Heart right ventricle (tissue), 16 donors: ENCODE measurements at regions of chr4 and their contacts with region 1.

Region 1: DNA sequence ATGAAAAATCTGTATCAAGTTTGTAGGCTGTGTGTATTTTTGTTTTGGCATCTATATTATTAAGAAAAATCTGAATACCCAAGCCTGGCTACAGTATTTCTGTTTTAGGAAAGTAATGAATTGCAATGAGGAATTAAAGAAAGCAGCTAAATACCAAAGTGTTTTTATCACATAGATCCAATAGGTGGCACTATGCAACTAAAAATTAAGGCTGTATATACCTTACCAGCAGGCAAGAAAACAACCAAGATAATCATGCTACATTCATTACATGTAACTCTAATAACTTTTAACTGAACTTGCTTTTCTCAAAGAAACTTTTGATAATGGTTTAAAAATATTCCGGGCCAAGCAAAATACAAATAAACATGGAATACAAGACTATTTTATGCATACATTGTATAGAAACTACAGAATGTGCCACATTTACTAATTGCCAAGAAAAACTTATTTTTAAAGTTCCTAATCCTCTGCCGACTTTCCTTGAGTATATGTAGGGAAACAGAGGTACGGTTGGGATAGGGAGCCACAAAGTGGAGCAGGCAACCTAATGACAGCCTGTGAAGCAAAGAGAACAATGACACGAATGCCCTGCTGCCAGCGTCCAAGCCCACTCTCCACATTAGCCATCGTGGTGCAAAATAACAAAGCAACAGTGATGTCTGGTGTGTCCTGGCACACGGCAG is 63.7 kb downstream of the SEC24D start:
- DNase-seq: no peak
- ATAC-seq: peak; percentile 63 to 89 (median 80)
- H3K4me3 ChIP-seq: peak overlapping the region in 5 of 10 donors; percentile 13 to 25 (median 23)
- H3K27ac ChIP-seq: peak overlapping the region; percentile 6 to 81 (median 55)
- H3K4me1 ChIP-seq: peaks cover 5 to 85% (median 67%) of the 10 kb centered on the region in 9 donors
- H3K27me3 ChIP-seq: no peaks in the 10 kb centered on the region
- CTCF ChIP-seq: peak; percentile 28 to 78 (median 64)

Region 2: DNA sequence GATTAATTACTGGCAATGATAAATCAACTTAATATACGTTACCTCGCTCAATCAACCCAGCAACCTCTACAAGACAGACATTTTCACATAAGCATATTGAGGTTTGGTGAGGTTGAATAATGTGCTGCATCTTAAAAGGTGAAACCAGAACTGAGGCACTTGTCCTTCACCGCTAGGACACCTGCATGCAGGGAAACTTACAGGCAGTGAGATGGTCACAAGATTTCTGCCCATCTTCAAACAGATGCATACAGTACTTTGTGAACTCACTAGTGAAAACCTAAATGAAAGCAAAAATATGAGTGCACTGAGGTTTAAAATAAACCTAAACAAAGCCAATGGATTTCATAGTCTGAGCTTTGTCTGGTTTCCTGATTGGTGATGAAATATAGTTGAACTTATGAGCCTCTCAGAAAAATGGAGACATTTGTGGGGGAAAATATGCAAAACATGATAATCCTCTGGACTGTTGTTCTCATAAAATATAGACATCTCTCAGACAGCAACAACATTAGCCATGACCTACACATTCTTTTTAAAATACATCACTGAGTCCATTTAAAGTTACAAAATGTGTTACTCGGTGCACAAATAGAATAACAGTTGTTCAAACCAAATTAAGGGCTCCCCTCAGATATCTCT is 398.5 kb before region 1 on chr4:
- intact Hi-C with region 1: no loop called
- DNase-seq: no peak
- ATAC-seq: no peak
- H3K4me3 ChIP-seq: no peak overlapping the region
- H3K27ac ChIP-seq: no peak overlapping the region
- H3K4me1 ChIP-seq: no peaks in the 10 kb centered on the region
- H3K27me3 ChIP-seq: peaks cover 0 to 15% (median 0%) of the 10 kb centered on the region in 7 donors
- CTCF ChIP-seq: no peak

Region 3: GRCh38 chr4:118746292-118746919 is 25.8 kb before region 1 on chr4:
- intact Hi-C with region 1: loop called in 1 of 10 experiments (anchors 1 kb)
- DNase-seq: peak in 1 of 2 donors; percentile 68
- ATAC-seq: peak; percentile 76 to 96 (median 89)
- H3K4me3 ChIP-seq: no peak overlapping the region
- H3K27ac ChIP-seq: peak overlapping the region; percentile 28 to 87 (median 74)
- H3K4me1 ChIP-seq: peaks cover 10 to 70% (median 34%) of the 10 kb centered on the region in 9 donors
- H3K27me3 ChIP-seq: no peaks in the 10 kb centered on the region
- CTCF ChIP-seq: no peak

Region 4: DNA sequence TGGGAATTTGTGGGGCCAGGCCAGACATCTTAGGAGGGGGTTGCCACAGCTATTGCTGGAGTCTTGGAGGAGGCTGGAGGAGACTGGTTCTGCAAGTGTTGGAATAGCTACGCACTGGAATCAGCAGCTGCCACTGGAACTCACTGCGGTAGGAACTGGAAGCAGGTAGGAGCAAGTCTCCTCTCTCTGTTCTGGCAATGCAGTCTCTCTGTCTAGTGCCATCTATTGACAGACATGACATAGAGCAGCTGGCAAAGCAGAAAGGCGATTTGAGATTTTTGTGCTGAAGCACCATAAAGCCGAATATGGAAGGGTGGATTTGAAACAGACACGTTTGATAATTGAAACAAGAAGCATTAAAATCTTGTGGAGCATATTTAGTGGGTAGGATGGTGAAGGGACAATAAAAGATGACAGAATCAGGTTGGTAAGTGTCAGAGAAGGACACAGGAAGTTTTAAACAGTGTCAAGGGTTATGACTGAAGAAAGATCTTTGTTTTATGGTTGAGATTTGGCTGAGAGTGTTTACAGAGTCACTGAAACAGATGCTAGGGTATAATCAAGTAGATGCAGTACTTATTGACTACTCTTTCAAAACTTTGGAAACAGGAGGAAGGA is 93.0 kb after region 1 on chr4:
- intact Hi-C with region 1: loop called in 1 of 10 experiments (anchors 5 kb)
- DNase-seq: peak in 1 of 2 donors; percentile 23
- ATAC-seq: peak; percentile 67 to 88 (median 77)
- H3K4me3 ChIP-seq: no peak overlapping the region
- H3K27ac ChIP-seq: peak overlapping the region in 2 of 10 donors; percentile 18 to 32
- H3K4me1 ChIP-seq: peaks cover 2 to 21% (median 10%) of the 10 kb centered on the region in 9 donors
- H3K27me3 ChIP-seq: no peaks in the 10 kb centered on the region
- CTCF ChIP-seq: peak; percentile 29 to 76 (median 58)

Region 5: DNA sequence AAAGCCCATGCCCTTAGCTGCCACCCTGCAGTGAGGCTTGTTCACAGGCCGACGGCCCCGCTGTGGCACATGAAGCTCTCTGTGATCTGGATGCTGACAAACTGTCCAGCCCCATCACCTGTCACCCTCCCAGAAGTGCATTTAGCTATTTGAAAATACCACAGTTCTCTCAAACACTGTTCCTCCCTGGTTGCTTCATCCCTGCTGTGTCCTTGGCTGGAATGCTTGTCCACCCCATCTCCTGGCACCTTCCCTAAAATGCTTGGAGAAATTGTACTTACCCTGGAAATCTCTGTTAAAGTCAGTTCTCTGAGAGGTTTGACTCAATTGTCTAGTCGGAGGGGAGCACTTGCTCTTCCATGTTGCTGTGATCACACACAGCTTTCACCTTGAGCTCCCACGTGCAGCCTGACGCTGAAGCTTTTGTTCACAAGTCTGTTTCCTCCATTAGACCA is 126.5 kb after region 1 on chr4:
- intact Hi-C with region 1: loop called in 1 of 10 experiments (anchors 10 kb)
- DNase-seq: peak; percentile 54 to 62
- ATAC-seq: peak; percentile 64 to 94 (median 86)
- H3K4me3 ChIP-seq: peak overlapping the region in 2 of 10 donors; percentile 4 to 7
- H3K27ac ChIP-seq: peak overlapping the region; percentile 38 to 93 (median 82)
- H3K4me1 ChIP-seq: peaks cover 4 to 85% (median 39%) of the 10 kb centered on the region in 9 donors
- H3K27me3 ChIP-seq: no peaks in the 10 kb centered on the region
- CTCF ChIP-seq: no peak

Region 6: DNA sequence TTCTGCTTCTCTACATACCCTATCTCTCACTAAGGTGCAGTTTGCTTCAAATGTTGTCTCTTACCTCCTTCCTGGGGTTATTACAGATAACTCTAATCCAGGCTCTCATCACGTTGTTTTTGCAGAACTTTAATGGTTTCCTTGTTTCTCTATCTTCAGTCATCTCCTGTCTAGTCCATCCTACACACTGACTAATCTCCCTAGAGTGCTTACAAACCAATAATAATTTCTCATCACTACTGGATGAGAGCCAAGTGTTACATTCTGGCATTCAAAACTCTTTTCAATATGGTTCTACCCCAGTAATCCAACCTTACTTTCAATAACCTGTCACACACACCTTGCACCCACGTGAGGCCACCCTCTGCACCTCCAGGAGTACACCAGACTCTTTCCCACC is 202.5 kb after region 1 on chr4:
- intact Hi-C with region 1: loop called (anchors 1 to 10 kb)
- DNase-seq: no peak
- ATAC-seq: peak in 2 of 8 donors; percentile 3 to 14
- H3K4me3 ChIP-seq: no peak overlapping the region
- H3K27ac ChIP-seq: peak overlapping the region in 4 of 10 donors; percentile 10 to 50 (median 27)
- H3K4me1 ChIP-seq: peaks cover 4 to 68% (median 44%) of the 10 kb centered on the region in 9 donors
- H3K27me3 ChIP-seq: no peaks in the 10 kb centered on the region
- CTCF ChIP-seq: no peak